Heart right ventricle (tissue), 16 donors: ENCODE measurements at regions of chr7 and their contacts with region 1.

Region 1: GRCh38 chr7:131619336-131620305 is 63.2 kb upstream of the PODXL start:
- DNase-seq: no peak
- ATAC-seq: no peak
- H3K4me3 ChIP-seq: no peak overlapping the region
- H3K27ac ChIP-seq: peak overlapping the region in 5 of 10 donors; percentile 7 to 87 (median 64)
- H3K4me1 ChIP-seq: peaks cover 28 to 64% (median 53%) of the 10 kb centered on the region in 9 donors
- H3K27me3 ChIP-seq: no peaks in the 10 kb centered on the region
- CTCF ChIP-seq: no peak

Region 2: DNA sequence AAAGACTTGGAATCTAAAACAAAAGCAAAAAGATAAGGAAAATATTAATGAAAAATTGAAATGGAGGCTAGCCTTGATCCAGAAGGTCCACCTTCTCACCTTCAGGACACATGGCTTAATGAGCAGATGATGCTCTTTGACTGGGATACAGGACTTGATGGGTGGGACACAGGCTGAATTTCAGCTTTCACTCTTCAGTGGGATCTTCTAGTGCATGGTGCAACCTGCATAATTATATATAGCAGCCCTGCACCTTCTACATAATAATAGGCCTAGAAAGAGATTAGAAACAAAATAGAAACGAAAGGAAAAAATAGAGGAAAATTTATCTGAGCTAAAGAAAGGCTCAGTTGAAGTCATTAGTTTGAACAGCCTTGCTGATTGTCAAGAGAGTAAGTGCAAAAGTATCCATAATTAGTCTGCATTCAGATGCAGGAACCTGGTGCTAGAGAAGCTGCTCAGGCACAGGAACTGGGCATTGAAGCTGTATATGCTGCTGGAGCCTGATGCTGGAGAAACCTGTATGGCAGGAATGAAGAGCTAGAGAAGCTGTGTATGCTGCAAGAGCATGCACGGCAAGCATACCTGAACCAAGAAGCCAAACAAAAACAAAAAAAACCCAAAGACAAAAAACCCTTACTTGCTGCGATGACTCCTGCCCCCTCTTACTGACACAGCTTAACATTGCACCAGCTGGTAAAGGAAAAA is 272.6 kb before region 1 on chr7:
- intact Hi-C with region 1: no loop called
- DNase-seq: no peak
- ATAC-seq: no peak
- H3K4me3 ChIP-seq: no peak overlapping the region
- H3K27ac ChIP-seq: no peak overlapping the region
- H3K4me1 ChIP-seq: peaks cover 3 to 60% (median 24%) of the 10 kb centered on the region in 9 donors
- H3K27me3 ChIP-seq: no peaks in the 10 kb centered on the region
- CTCF ChIP-seq: no peak

Region 3: DNA sequence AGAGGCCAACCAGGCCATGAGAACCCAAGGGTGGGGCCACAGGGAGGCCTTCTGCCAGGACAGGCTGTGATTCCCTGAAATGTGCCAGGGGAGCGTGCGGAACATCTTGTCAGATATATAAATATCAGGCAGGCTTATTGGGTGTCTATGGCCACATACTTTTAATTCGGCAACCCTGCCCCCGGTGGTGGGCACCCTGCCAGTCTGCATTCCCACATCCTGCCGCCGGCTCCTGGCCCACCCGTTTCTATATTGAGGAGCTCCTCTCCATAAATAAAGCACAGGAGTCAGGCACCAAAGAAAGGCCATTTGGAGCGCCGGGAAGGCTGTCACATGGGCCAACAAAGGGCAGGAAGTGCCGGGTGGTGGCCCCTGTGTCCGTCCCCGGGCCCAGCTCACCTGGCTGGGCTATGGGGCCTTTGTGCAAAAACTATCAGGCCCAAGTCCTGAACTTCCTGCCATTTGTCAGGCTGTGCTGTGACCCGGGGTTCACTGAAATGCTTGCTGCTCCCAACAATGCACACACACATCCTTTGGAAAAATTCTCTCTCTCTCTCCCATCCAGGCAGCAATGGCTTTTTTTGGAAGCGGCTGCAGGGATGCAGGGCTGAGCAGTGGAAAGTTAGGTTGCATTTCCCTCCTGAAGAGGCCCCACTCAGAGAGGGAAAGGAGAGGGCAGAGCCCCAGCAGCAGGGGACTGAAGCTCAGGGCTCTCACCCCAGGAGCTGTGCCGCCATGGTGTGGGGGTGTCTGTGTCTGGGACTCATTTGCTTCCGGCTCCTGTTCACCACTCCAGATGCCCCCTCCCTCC is 38.2 kb before region 1 on chr7:
- intact Hi-C with region 1: loop called in 3 of 10 experiments (anchors 1 to 5 kb)
- DNase-seq: peak; percentile 83 to 84
- ATAC-seq: peak; percentile 78 to 94 (median 91)
- H3K4me3 ChIP-seq: no peak overlapping the region
- H3K27ac ChIP-seq: peak overlapping the region; percentile 68 to 91 (median 86)
- H3K4me1 ChIP-seq: peaks cover 4 to 38% (median 28%) of the 10 kb centered on the region in 9 donors
- H3K27me3 ChIP-seq: no peaks in the 10 kb centered on the region
- CTCF ChIP-seq: peak in 8 of 9 donors; percentile 4 to 48 (median 24)

Region 4: GRCh38 chr7:131723926-131724325 is 104.3 kb after region 1 on chr7:
- intact Hi-C with region 1: no loop called
- DNase-seq: no peak
- ATAC-seq: peak in 5 of 8 donors; percentile 43 to 72 (median 53)
- H3K4me3 ChIP-seq: no peak overlapping the region
- H3K27ac ChIP-seq: no peak overlapping the region
- H3K4me1 ChIP-seq: no peaks in the 10 kb centered on the region
- H3K27me3 ChIP-seq: no peaks in the 10 kb centered on the region
- CTCF ChIP-seq: no peak